CD4-positive, alpha-beta T cell (primary cell): ENCODE measurements at regions of chr11 and their contacts with region 1.

Region 1: DNA sequence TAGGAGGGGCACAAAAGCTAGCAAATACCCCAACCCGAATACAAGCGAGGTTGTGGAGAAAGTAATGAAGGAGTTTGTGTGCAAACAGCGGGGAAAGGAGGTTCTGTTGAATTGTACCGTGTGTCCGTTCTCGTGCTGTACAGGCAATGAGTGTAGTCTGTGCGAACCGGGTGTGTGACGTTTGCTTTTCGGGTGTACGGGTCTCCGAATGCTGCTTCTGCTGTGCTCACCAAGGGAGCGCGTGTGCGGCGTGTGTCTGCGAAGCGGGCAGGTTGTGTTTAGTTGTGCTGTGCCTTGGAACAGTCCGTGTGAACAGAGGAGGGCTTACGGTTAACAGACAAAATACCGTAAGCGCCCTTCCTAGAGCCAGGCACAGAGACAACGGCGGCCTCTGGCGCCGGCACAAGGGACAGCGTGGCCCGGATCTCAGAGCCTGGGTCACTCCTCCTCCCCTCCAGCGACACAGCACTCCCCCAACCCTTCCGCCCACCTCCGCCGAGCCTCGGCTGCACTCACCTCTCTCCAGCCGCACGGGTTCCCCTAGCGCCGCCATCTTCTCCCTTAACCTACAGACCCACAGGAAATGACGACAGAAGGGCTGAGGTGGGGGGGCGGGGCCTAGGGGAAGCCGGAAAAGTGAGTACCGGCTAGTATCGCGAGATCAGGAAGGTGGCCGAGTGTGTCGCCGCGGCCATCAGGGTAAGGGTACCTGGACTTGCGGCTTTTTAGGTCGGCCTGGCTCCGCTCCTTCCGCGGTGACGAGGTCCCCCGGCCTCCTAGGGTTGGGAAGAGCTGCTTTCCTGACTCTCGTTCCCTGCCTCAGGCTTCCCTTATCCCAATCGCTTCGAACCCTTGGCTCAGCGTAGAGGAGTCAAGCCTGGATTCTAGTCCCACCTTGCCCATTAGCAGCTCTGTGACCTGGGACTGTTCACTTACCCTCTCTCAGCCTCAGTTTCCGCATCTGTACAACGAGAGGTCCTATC is at the start of gene LIN7C:
- DNase-seq: peak; percentile 91 to 98 (median 94)
- ATAC-seq: peak; percentile 86
- H3K4me3 ChIP-seq: peak within 1 kb of the TSS; percentile 90
- H3K4me3 Mint-ChIP-seq: peak within 1 kb of the TSS; percentile 99
- H3K27ac ChIP-seq: peak within 1 kb of the TSS; percentile 80 to 95
- H3K27ac Mint-ChIP-seq: peak within 1 kb of the TSS; percentile 99
- H3K4me1 ChIP-seq: peaks cover 20% of the 10 kb centered on the region
- H3K4me1 Mint-ChIP-seq: peaks cover 63% of the 10 kb centered on the region
- H3K27me3 ChIP-seq: no peaks in the 10 kb centered on the region
- H3K27me3 Mint-ChIP-seq: no peaks in the 10 kb centered on the region
- CTCF ChIP-seq: no peak
- total RNA-seq, gene LIN7C: 27.1 to 27.6 TPM

Region 2: GRCh38 chr11:27362749-27363575 is 143.5 kb before region 1 on chr11 and contains the start of gene CCDC34:
- CTCF ChIA-PET with region 1: no interaction called
- POLR2A ChIA-PET with region 1: no interaction called
- intact Hi-C with region 1: loop called (anchors 2 to 10 kb)
- DNase-seq: peak; percentile 70 to 96 (median 87)
- ATAC-seq: peak; percentile 98
- H3K4me3 ChIP-seq: peak within 1 kb of the TSS; percentile 83
- H3K4me3 Mint-ChIP-seq: peak within 1 kb of the TSS; percentile 81
- H3K27ac ChIP-seq: no peak within 1 kb of the TSS
- H3K27ac Mint-ChIP-seq: peak within 1 kb of the TSS; percentile 72
- H3K4me1 ChIP-seq: peaks cover 13% of the 10 kb centered on the region
- H3K4me1 Mint-ChIP-seq: peaks cover 30% of the 10 kb centered on the region
- H3K27me3 ChIP-seq: no peaks in the 10 kb centered on the region
- H3K27me3 Mint-ChIP-seq: no peaks in the 10 kb centered on the region
- CTCF ChIP-seq: no peak
- total RNA-seq, gene CCDC34: 1.3 to 1.6 TPM

Region 3: DNA sequence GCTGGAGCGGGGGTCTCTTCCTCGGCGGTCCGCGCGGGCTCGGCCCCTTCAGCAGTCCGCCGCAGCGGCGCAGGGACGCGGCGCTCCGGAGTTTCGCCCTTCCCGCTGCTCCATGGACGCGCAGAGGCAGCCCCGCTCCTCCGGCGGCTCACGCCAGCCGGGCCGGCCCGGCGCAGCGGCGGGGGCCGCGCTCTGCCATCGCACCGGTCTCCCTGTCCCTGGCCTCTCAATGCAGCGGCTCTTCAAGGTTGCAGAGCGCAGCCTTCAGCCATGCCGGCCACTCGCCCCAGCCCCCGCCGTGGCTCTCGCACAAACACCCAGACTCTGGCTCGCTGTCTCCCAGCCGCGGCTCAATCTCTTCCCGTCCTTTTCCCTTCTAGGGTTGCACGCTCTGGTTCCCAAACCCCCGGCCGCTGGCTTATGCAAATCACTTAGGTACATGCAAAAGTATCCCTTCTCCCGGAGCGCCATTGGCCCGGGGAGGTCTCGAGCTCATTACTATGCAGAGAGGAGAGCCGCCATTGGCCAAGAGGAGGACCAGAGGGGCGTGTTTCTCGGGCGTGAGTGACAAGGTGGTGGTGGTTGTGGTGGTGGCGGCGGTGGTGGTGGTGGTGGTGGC is 34.0 kb before region 1 on chr11 and contains the start of gene LGR4:
- CTCF ChIA-PET with region 1: no interaction called
- POLR2A ChIA-PET with region 1: no interaction called
- intact Hi-C with region 1: loop called in 1 of 2 experiments (anchors 5 kb)
- DNase-seq: peak; percentile 53 to 85 (median 66)
- ATAC-seq: peak; percentile 92
- H3K4me3 ChIP-seq: peak within 1 kb of the TSS; percentile 71
- H3K4me3 Mint-ChIP-seq: peak within 1 kb of the TSS; percentile 93
- H3K27ac ChIP-seq: no peak within 1 kb of the TSS
- H3K27ac Mint-ChIP-seq: peak within 1 kb of the TSS; percentile 7
- H3K4me1 ChIP-seq: peaks cover 17% of the 10 kb centered on the region
- H3K4me1 Mint-ChIP-seq: peaks cover 24% of the 10 kb centered on the region
- H3K27me3 ChIP-seq: peaks cover 8 to 18% of the 10 kb centered on the region in 2 experiments
- H3K27me3 Mint-ChIP-seq: peaks cover 24% of the 10 kb centered on the region
- CTCF ChIP-seq: no peak
- total RNA-seq, gene LGR4: 0.69 to 0.87 TPM

Region 4: DNA sequence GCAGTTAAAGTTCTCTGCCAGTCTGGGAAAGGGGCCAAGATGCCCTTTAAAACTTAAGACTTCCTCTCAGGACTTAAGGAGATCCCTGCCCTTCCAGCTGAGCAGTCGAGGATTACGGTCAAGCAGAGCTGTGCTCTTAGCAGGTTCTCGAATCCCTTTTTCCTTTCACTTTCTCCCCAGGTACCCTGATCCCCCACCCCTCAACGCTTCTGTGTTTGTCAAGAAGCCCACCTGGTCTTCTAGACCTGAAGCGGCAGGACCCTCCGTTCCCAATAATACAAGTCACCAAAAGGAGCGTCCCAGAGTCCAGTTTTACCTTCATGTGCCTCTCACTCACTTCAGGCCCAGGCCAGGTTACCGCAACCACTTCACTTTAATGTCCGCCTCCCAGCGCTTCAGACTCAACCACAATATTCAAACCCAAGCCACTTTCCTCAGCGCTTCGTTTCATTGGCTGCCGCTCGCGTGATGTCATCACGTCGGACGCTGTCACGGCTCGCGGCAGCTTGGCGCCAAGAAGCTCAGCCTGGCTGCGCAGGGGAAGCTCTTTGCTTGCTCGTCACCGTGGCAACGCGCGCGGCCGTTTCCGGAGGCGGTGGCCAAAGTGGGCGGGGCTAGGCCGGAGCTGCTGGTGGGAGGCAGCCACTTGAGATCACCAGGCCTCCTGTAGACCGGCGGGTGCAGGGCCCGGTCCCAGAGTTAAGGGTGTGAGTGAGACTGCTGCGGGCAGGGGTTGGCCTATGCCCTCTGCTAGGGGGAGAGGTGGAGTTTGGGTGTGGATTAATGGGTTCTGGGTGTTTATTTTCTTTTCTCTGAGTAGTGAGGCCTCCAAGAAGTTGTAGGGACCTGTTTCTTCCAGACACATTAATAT is 601.5 kb after region 1 on chr11 and contains the starts of genes KIF18A and METTL15:
- CTCF ChIA-PET with region 1: no interaction called
- POLR2A ChIA-PET with region 1: interaction called, 4 read pairs
- intact Hi-C with region 1: loop called (anchors 1 to 2 kb)
- DNase-seq: peak; percentile 94 to 99 (median 96)
- ATAC-seq: peak; percentile 89
- H3K4me3 ChIP-seq: peak within 1 kb of the TSS; percentile 66
- H3K4me3 Mint-ChIP-seq: peak within 1 kb of the TSS; percentile 98
- H3K27ac ChIP-seq: peak within 1 kb of the TSS; percentile 75 to 92
- H3K27ac Mint-ChIP-seq: peak within 1 kb of the TSS; percentile 98
- H3K4me1 ChIP-seq: peaks cover 24% of the 10 kb centered on the region
- H3K4me1 Mint-ChIP-seq: peaks cover 73% of the 10 kb centered on the region
- H3K27me3 ChIP-seq: no peaks in the 10 kb centered on the region
- H3K27me3 Mint-ChIP-seq: no peaks in the 10 kb centered on the region
- CTCF ChIP-seq: no peak
- total RNA-seq, gene KIF18A: 3.4 to 5.3 TPM
- total RNA-seq, gene METTL15: 3.5 to 4.4 TPM